ENCODE measurements at regions of chr4 and their contacts with region 1.

Region 1: GRCh38 chr4:143531380-143531779 is 17.9 kb downstream of the SMARCA5 start:
- DNase-seq: no peak
- H3K4me3 ChIP-seq: no peak overlapping the region
- H3K27ac ChIP-seq: no peak overlapping the region
- H3K27me3 ChIP-seq: no peaks in the 10 kb centered on the region
- CTCF ChIP-seq: peak; percentile 57

Region 2: GRCh38 chr4:143549928-143550327 is 18.5 kb after region 1 on chr4:
- CTCF ChIA-PET with region 1: interaction called, 20 read pairs
- POLR2A ChIA-PET with region 1: no interaction called
- DNase-seq: no peak
- H3K4me3 ChIP-seq: no peak overlapping the region
- H3K27ac ChIP-seq: no peak overlapping the region
- H3K27me3 ChIP-seq: no peaks in the 10 kb centered on the region
- CTCF ChIP-seq: no peak